Ascending aorta (tissue), 2 donors: ENCODE measurements at regions of chr19 and their contacts with region 1.

Region 1: DNA sequence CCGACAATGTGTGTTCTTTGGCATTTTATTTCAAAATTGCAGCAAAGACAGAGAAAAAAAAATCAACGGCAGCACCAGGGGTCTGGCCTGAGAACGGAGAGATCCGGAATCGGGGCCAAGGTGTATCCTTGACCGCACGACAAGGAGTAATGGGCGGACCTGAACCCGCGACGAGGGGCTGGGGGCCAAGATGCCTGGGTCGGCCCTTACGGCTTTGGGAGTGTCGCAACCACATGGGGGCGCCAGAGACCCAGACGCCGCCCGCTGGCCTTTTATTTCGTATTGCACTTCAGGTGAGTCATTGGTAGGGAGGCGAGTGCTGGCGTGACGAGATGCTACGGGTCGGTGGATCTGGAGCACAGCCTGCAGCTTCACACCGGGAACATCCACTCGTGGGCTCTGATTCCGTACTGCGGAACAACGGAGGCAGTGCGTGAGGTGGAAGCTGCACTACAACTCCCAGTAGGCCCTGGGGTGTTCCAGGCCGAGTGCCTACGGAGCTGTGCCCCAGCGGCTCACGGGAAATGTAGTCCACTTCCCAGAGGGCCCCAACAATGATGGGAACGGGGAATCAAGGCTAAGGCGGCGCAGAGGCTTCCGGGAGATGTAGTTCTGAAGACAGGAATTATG is 15.7 kb downstream of the BCAT2 start:
- DNase-seq: peak; percentile 84 to 96
- H3K4me3 ChIP-seq: peak overlapping the region; percentile 14 to 61
- H3K27ac ChIP-seq: peak overlapping the region; percentile 80 to 92
- H3K4me1 ChIP-seq: peaks cover 4 to 8% of the 10 kb centered on the region in 2 donors
- H3K27me3 ChIP-seq: no peaks in the 10 kb centered on the region
- CTCF ChIP-seq: peak; percentile 93 to 99 (median 97)

Region 2: DNA sequence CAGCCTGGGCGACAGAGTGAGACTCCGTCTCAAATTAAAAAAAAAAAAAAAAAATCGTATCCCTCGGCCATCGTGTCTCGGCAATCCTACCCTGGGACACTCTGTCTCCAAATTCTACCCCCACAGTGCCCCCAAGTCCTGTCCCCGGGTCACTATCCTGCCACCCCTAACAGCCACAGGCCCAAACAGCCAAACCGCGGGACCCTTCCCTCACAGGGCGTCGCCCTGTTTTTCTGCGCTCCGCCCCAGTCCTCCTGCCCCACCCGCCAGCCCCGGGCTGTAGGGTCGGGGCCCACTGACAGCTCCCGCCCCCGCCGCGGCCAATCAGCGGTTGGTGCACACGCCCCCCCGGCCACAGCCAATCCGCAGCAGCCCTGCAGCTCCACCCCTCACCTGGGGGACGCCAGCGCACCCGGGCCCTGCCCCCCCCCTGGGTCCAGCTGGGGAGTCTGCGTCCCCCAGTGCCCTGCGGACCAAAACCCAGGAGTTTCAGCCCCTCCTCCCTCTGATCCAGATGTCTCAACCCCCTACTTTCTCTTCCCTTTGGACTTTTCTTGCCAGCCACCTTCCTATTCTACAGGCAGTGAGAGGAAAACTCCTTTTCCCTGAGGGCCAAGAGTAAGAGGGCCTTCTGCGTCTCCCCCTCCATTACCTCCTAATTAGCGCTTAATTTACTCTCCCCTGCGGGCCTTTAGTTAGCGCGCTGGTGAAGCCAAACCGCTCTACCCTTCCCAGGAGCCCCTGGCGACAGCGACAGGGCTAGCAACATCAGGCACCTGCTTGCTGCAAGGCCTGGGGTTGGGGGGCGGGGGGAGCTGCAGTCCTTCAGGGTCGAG is 17.1 kb after region 1 on chr19:
- intact Hi-C with region 1: loop called (anchors 1 kb)
- DNase-seq: peak; percentile 66 to 94
- H3K4me3 ChIP-seq: peak overlapping the region; percentile 71 to 82
- H3K27ac ChIP-seq: peak overlapping the region; percentile 91 to 94
- H3K4me1 ChIP-seq: peaks cover 0 to 12% of the 10 kb centered on the region in 2 donors
- H3K27me3 ChIP-seq: no peaks in the 10 kb centered on the region
- CTCF ChIP-seq: no peak

Region 3: DNA sequence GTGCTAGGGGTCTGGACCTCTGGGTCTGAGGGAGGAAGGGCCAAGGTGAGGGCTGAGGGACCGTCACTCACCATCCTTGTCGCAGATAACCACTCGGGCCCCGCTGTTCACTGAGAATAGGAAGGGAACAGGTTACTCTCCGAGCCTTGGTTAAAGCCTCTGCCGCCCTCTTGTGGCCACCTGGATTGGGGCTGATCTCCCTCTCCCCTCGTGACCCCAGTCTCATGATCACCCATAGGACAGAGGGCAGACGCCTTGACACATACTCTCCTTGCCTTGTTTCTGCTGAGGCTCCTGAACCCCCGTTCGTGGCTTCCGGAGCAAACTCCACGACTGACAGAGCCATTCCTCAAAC is 40.5 kb after region 1 on chr19:
- intact Hi-C with region 1: loop called (anchors 1 kb)
- DNase-seq: peak; percentile 89 to 98
- H3K4me3 ChIP-seq: peak overlapping the region; percentile 59 to 67
- H3K27ac ChIP-seq: peak overlapping the region; percentile 88 to 94
- H3K4me1 ChIP-seq: peaks cover 3 to 8% of the 10 kb centered on the region in 2 donors
- H3K27me3 ChIP-seq: no peaks in the 10 kb centered on the region
- CTCF ChIP-seq: peak; percentile 82 to 96 (median 85)

Region 4: GRCh38 chr19:48872182-48872883 is 77.2 kb after region 1 on chr19 and contains the start of gene PPP1R15A:
- intact Hi-C with region 1: loop called (anchors 2 kb)
- DNase-seq: peak; percentile 96 to 99
- H3K4me3 ChIP-seq: peak within 1 kb of the TSS; percentile 91 to 99
- H3K27ac ChIP-seq: peak within 1 kb of the TSS; percentile 100
- H3K4me1 ChIP-seq: peaks cover 10 to 31% of the 10 kb centered on the region in 2 donors
- H3K27me3 ChIP-seq: no peaks in the 10 kb centered on the region
- CTCF ChIP-seq: peak in 2 of 3 experiments; percentile 10 to 40
- total RNA-seq, gene PPP1R15A: 142 TPM